CD8-positive, alpha-beta T cell (primary cell): ENCODE measurements at regions of chr17 and their contacts with region 1.

Region 1: DNA sequence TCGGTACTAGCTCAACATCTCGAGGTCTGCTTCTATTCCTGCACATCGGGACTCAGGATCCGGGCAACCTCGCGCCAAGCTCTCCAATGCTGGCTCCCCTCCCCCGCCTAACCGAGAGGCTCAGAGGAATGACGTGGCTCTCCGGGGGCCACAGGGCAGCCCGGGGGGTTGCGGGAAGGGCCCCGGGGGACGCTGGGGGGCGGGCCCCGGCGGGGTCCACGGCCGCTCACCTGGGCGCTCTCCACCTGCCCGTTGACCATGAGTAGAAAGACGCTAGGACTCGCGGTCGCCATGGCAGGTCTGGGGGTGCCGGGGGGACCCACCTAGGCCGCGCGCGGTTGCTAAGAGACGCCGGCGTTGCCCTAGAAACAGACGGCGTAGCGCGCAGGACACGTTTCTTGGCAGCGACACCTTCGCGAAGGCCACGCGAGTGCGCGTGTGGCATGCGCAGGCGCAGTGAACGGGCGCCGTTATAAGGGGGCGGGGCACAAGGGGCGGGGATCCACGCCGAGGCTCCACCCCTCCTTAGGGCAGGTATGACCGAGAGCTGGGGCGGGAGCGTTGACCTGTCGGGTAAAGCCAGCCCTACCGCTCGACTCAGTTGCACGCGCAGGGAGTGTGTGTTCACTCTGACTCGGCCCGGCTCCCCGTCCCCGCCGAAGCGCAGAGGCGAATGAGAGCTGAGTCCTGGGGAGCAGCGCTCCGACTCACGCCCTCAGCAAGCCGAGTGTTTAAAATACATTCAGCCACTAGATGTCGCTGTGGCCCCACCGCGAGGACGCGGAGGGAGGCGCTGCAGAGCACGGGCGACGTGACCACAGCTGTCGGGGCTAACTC is at the start of gene B9D1:
- DNase-seq: peak; percentile 91 to 98 (median 94)
- ATAC-seq: peak; percentile 92
- H3K4me3 ChIP-seq: peak within 1 kb of the TSS; percentile 81 to 89
- H3K4me3 Mint-ChIP-seq: peak within 1 kb of the TSS; percentile 92
- H3K27ac ChIP-seq: peak within 1 kb of the TSS; percentile 55 to 61
- H3K27ac Mint-ChIP-seq: peak within 1 kb of the TSS; percentile 90
- H3K4me1 ChIP-seq: peaks cover 11% of the 10 kb centered on the region
- H3K4me1 Mint-ChIP-seq: peaks cover 9% of the 10 kb centered on the region
- H3K27me3 ChIP-seq: no peaks in the 10 kb centered on the region
- H3K27me3 Mint-ChIP-seq: peaks cover 7% of the 10 kb centered on the region
- CTCF ChIP-seq: peak; percentile 98
- total RNA-seq, gene B9D1: 0.72 to 0.92 TPM

Region 2: GRCh38 chr17:18855831-18856569 is 506.5 kb before region 1 on chr17:
- CTCF ChIA-PET with region 1: no interaction called
- POLR2A ChIA-PET with region 1: no interaction called
- intact Hi-C with region 1: loop called in 1 of 2 experiments (anchors 5 kb)
- DNase-seq: peak; percentile 72 to 95 (median 88)
- ATAC-seq: peak; percentile 84
- H3K4me3 ChIP-seq: peak overlapping the region; percentile 66 to 72
- H3K4me3 Mint-ChIP-seq: peak overlapping the region; percentile 91
- H3K27ac ChIP-seq: peak overlapping the region; percentile 32 to 62
- H3K27ac Mint-ChIP-seq: peak overlapping the region; percentile 92
- H3K4me1 ChIP-seq: peaks cover 37% of the 10 kb centered on the region
- H3K4me1 Mint-ChIP-seq: peaks cover 45% of the 10 kb centered on the region
- H3K27me3 ChIP-seq: no peaks in the 10 kb centered on the region
- H3K27me3 Mint-ChIP-seq: no peaks in the 10 kb centered on the region
- CTCF ChIP-seq: no peak

Region 3: GRCh38 chr17:18992454-18993130 is 369.9 kb before region 1 on chr17:
- CTCF ChIA-PET with region 1: no interaction called
- POLR2A ChIA-PET with region 1: no interaction called
- intact Hi-C with region 1: no loop called
- DNase-seq: peak; percentile 11 to 83 (median 57)
- ATAC-seq: peak; percentile 92
- H3K4me3 ChIP-seq: no peak overlapping the region
- H3K4me3 Mint-ChIP-seq: peak overlapping the region; percentile 50
- H3K27ac ChIP-seq: no peak overlapping the region
- H3K27ac Mint-ChIP-seq: peak overlapping the region; percentile 37
- H3K4me1 ChIP-seq: peaks cover 20% of the 10 kb centered on the region
- H3K4me1 Mint-ChIP-seq: peaks cover 35% of the 10 kb centered on the region
- H3K27me3 ChIP-seq: no peaks in the 10 kb centered on the region
- H3K27me3 Mint-ChIP-seq: no peaks in the 10 kb centered on the region
- CTCF ChIP-seq: no peak

Region 4: DNA sequence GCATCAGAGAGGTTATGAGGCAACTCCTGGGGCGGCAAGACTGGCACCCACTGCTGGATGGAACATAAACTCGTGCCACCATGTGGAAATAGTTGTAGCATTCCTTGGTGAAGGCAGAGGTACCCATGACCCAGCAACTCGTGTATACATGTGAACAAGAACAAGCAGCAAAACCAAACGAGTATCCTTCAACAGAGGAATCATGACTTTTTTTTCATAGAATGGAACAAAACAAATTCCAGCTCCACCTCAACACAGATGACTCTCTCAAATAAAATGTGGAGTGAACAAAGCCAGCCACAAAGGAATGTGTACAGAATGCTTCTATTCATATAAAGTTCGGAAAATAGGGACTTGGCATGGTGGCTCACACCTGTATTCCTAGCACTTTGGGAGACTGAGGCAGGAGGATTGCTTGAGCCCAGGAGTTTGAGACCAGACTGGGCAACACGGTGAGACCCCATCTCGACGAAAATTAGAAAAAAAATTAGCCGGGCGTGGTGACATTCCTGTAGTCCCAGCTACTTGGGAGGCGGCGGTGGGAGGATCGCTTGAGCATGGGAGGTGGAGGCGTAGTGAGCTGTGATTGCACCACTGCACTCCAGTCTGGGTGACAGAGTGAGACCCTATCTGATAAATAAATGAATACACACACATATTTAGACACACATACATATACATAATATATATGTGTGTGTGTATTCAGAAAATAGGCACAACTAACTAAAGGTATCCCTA is 35.3 kb before region 1 on chr17:
- CTCF ChIA-PET with region 1: no interaction called
- POLR2A ChIA-PET with region 1: no interaction called
- intact Hi-C with region 1: no loop called
- DNase-seq: no peak
- ATAC-seq: no peak
- H3K4me3 ChIP-seq: no peak overlapping the region
- H3K4me3 Mint-ChIP-seq: no peak overlapping the region
- H3K27ac ChIP-seq: no peak overlapping the region
- H3K27ac Mint-ChIP-seq: no peak overlapping the region
- H3K4me1 ChIP-seq: no peaks in the 10 kb centered on the region
- H3K4me1 Mint-ChIP-seq: no peaks in the 10 kb centered on the region
- H3K27me3 ChIP-seq: no peaks in the 10 kb centered on the region
- H3K27me3 Mint-ChIP-seq: no peaks in the 10 kb centered on the region
- CTCF ChIP-seq: no peak

Region 5: GRCh38 chr17:19433727-19434340 is 71.3 kb after region 1 on chr17:
- CTCF ChIA-PET with region 1: interaction called, 10 read pairs
- POLR2A ChIA-PET with region 1: no interaction called
- intact Hi-C with region 1: no loop called
- DNase-seq: peak in 1 of 9 experiments; percentile 25
- ATAC-seq: no peak
- H3K4me3 ChIP-seq: no peak overlapping the region
- H3K4me3 Mint-ChIP-seq: no peak overlapping the region
- H3K27ac ChIP-seq: no peak overlapping the region
- H3K27ac Mint-ChIP-seq: no peak overlapping the region
- H3K4me1 ChIP-seq: no peaks in the 10 kb centered on the region
- H3K4me1 Mint-ChIP-seq: no peaks in the 10 kb centered on the region
- H3K27me3 ChIP-seq: no peaks in the 10 kb centered on the region
- H3K27me3 Mint-ChIP-seq: no peaks in the 10 kb centered on the region
- CTCF ChIP-seq: no peak

Region 6: GRCh38 chr17:19457830-19458271 is 95.4 kb after region 1 on chr17:
- CTCF ChIA-PET with region 1: interaction called, 13 read pairs
- POLR2A ChIA-PET with region 1: interaction called, 7 read pairs
- intact Hi-C with region 1: no loop called
- DNase-seq: peak in 1 of 9 experiments; percentile 31
- ATAC-seq: no peak
- H3K4me3 ChIP-seq: no peak overlapping the region
- H3K4me3 Mint-ChIP-seq: no peak overlapping the region
- H3K27ac ChIP-seq: no peak overlapping the region
- H3K27ac Mint-ChIP-seq: no peak overlapping the region
- H3K4me1 ChIP-seq: peaks cover 11% of the 10 kb centered on the region
- H3K4me1 Mint-ChIP-seq: peaks cover 22% of the 10 kb centered on the region
- H3K27me3 ChIP-seq: no peaks in the 10 kb centered on the region
- H3K27me3 Mint-ChIP-seq: peaks cover 3% of the 10 kb centered on the region
- CTCF ChIP-seq: no peak

Region 7: DNA sequence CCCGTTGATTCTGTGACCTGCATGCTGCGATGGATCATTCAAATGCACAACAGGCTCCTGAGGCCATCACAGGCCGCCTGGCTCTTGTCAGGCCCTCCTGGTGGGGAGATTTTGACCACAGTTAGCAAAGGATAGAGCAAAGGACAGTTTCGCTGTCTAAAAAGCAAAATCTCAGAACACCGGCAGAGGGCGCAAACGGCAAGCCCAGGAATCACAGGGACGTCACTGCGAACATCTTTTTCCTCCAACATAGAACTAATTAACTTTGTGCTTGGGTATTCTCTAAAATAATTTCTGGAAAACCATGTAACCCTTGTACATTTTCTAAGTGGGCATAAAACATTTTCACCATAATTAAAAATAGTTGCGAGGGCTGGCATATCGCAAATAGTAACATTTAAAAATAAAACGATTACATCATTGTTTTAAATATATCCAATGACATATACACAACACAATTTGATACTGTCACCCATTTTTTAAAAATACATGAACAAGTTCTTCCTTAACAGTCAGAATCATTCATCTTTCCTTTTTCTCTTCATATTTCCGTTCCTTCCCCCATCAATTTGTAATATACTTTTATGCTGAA is 151.5 kb after region 1 on chr17:
- CTCF ChIA-PET with region 1: interaction called, 5 read pairs
- POLR2A ChIA-PET with region 1: no interaction called
- intact Hi-C with region 1: loop called (anchors 1 to 2 kb)
- DNase-seq: peak; percentile 30 to 81 (median 69)
- ATAC-seq: peak; percentile 70
- H3K4me3 ChIP-seq: no peak overlapping the region
- H3K4me3 Mint-ChIP-seq: no peak overlapping the region
- H3K27ac ChIP-seq: no peak overlapping the region
- H3K27ac Mint-ChIP-seq: no peak overlapping the region
- H3K4me1 ChIP-seq: no peaks in the 10 kb centered on the region
- H3K4me1 Mint-ChIP-seq: no peaks in the 10 kb centered on the region
- H3K27me3 ChIP-seq: no peaks in the 10 kb centered on the region
- H3K27me3 Mint-ChIP-seq: no peaks in the 10 kb centered on the region
- CTCF ChIP-seq: peak; percentile 89

Region 8: GRCh38 chr17:19766422-19767270 is 404.2 kb after region 1 on chr17:
- CTCF ChIA-PET with region 1: interaction called, 18 read pairs
- POLR2A ChIA-PET with region 1: no interaction called
- intact Hi-C with region 1: loop called in 1 of 2 experiments (anchors 1 kb)
- DNase-seq: peak; percentile 55 to 90 (median 78)
- ATAC-seq: peak; percentile 92
- H3K4me3 ChIP-seq: no peak overlapping the region
- H3K4me3 Mint-ChIP-seq: no peak overlapping the region
- H3K27ac ChIP-seq: no peak overlapping the region
- H3K27ac Mint-ChIP-seq: no peak overlapping the region
- H3K4me1 ChIP-seq: peaks cover 22% of the 10 kb centered on the region
- H3K4me1 Mint-ChIP-seq: peaks cover 22% of the 10 kb centered on the region
- H3K27me3 ChIP-seq: no peaks in the 10 kb centered on the region
- H3K27me3 Mint-ChIP-seq: peaks cover 7% of the 10 kb centered on the region
- CTCF ChIP-seq: peak; percentile 93

Region 9: GRCh38 chr17:20009302-20010098 is 647.0 kb after region 1 on chr17 and contains the start of gene SPECC1:
- CTCF ChIA-PET with region 1: no interaction called
- POLR2A ChIA-PET with region 1: no interaction called
- intact Hi-C with region 1: loop called in 1 of 2 experiments (anchors 2 kb)
- DNase-seq: peak; percentile 69 to 93 (median 83)
- ATAC-seq: peak; percentile 96
- H3K4me3 ChIP-seq: peak within 1 kb of the TSS; percentile 62 to 80
- H3K4me3 Mint-ChIP-seq: peak within 1 kb of the TSS; percentile 88
- H3K27ac ChIP-seq: peak within 1 kb of the TSS in 1 of 2 experiments; percentile 42
- H3K27ac Mint-ChIP-seq: no peak within 1 kb of the TSS
- H3K4me1 ChIP-seq: peaks cover 5% of the 10 kb centered on the region
- H3K4me1 Mint-ChIP-seq: peaks cover 13% of the 10 kb centered on the region
- H3K27me3 ChIP-seq: peaks cover 0 to 4% of the 10 kb centered on the region in 2 experiments
- H3K27me3 Mint-ChIP-seq: peaks cover 38% of the 10 kb centered on the region
- CTCF ChIP-seq: peak; percentile 92
- total RNA-seq, gene SPECC1: 6.9 to 8.8 TPM